ENCODE measurements at regions of chr18 and their contacts with region 1.

Region 1: DNA sequence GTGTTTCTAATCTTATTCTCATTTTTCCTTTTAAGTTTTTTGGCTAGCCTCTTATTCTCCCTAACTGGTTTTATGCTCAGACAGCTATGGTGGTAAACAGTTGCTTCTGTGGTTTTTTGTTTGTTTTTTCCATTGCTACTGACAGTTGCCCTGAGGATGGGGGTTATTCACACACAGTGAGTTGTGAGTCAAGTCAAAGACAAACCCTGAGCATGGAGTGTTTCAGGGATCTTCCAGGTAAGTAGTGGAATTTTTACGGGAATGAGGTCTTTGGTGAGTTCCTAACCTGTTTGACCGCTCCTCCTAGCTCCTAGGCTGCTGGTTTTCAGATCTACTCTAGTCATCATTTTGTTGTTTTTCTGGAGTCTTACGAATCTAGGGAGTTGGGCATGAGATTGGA is 162.8 kb downstream of the ZNF407 start:
- DNase-seq: no peak
- H3K4me3 Mint-ChIP-seq: no peak overlapping the region
- H3K27ac Mint-ChIP-seq: no peak overlapping the region
- H3K4me1 Mint-ChIP-seq: no peaks in the 10 kb centered on the region
- H3K27me3 Mint-ChIP-seq: no peaks in the 10 kb centered on the region
- CTCF ChIP-seq: no peak

Region 2: DNA sequence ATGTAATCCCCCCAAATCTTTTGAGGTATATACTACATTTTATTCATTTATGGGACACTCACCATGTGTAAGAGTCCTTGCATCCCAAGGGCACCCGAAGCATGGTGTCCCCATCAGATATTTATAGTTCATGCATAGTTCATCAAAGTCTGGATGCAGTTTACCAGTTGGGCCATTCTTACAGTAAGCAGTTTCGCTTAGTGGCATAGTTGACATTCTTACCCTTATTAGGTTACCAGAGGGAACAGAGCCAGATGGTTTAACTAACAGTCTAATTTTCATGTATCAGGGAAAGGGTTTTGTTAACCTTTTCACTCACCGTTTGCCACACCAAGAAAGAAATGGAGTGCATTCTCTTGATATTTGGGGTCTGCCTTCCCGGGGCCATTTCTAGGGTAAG is 155.7 kb before region 1 on chr18:
- CTCF ChIA-PET with region 1: no interaction called
- intact Hi-C with region 1: no loop called
- DNase-seq: no peak
- H3K4me3 Mint-ChIP-seq: no peak overlapping the region
- H3K27ac Mint-ChIP-seq: no peak overlapping the region
- H3K4me1 Mint-ChIP-seq: peaks cover 4% of the 10 kb centered on the region
- H3K27me3 Mint-ChIP-seq: no peaks in the 10 kb centered on the region
- CTCF ChIP-seq: no peak

Region 3: GRCh38 chr18:74742573-74743243 is 17.7 kb before region 1 on chr18:
- CTCF ChIA-PET with region 1: interaction called, 10 read pairs
- intact Hi-C with region 1: no loop called
- DNase-seq: no peak
- H3K4me3 Mint-ChIP-seq: no peak overlapping the region
- H3K27ac Mint-ChIP-seq: no peak overlapping the region
- H3K4me1 Mint-ChIP-seq: peaks cover 11% of the 10 kb centered on the region
- H3K27me3 Mint-ChIP-seq: no peaks in the 10 kb centered on the region
- CTCF ChIP-seq: no peak

Region 4: DNA sequence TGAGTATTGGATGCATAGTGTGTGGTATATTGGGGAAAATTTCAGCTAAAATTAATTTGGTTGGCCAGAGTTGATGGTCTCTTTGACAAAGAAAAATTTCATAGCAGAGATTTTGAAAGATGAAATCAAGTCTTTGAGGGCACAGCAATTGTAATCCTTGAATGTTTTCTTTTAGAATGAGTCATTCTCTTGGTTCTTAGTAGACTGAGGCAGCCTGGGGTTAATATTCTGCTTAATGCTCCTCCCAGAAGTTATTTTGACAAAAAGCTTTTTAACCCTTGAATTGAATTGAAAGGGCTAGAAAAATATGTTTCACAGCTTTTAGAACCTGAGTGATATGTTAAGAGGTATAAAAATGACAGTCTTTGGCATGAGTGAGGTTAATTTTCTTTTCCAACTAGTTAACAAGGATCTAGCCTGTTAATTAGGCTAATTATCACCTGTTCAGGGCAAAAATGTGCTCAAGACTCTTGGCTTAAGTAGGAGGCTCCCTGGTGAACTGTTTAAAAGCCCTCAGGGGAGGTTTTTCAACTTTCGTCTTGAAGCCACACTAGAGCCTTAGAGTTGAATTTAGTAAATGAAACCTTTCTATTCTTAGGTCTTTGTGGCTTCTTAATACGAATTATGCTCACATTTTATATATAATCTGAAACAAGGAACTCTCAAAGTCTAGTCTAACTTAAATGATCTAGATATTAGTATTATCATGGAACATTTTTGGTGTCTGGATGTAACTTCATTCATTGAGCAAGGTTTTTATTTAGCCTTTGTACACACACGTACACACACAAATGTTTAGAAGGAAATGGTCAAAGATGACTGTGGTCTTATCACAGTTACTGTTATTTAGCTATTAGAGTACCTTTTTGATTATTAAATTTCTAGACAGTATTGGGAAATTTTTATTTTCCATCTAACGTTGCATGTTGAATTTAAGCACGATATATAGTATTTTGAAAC is 109.7 kb after region 1 on chr18:
- CTCF ChIA-PET with region 1: no interaction called
- intact Hi-C with region 1: no loop called
- DNase-seq: no peak
- H3K4me3 Mint-ChIP-seq: no peak overlapping the region
- H3K27ac Mint-ChIP-seq: no peak overlapping the region
- H3K4me1 Mint-ChIP-seq: peaks cover 11% of the 10 kb centered on the region
- H3K27me3 Mint-ChIP-seq: no peaks in the 10 kb centered on the region
- CTCF ChIP-seq: no peak

Measured in Calu3 (cell line).